ENCODE measurements at regions of chr5 and their contacts with region 1.

Region 1: DNA sequence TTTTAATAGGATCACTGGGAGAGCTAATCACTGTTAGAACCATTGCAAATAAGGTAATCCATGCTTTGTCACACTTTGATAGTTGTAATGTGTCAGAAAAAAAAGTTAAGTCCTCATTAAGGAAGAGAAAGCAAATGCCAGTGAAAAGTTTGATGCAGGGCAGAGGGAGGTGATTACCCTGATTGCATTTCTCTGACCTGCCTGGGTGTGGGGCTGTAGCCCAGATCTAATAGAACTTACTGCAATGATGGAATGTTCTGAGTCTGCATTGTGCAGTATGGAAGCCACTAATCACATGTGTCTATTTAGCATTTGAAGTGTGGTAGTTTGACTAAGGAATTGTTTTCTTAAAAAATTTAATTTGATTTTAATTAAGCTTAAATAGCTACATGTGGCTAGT is 202.7 kb downstream of the ATP10B start:
- DNase-seq: peak; percentile 56
- H3K4me3 Mint-ChIP-seq: no peak overlapping the region
- H3K27ac Mint-ChIP-seq: no peak overlapping the region
- H3K4me1 Mint-ChIP-seq: no peaks in the 10 kb centered on the region
- H3K27me3 Mint-ChIP-seq: no peaks in the 10 kb centered on the region
- CTCF ChIP-seq: peak; percentile 56

Region 2: DNA sequence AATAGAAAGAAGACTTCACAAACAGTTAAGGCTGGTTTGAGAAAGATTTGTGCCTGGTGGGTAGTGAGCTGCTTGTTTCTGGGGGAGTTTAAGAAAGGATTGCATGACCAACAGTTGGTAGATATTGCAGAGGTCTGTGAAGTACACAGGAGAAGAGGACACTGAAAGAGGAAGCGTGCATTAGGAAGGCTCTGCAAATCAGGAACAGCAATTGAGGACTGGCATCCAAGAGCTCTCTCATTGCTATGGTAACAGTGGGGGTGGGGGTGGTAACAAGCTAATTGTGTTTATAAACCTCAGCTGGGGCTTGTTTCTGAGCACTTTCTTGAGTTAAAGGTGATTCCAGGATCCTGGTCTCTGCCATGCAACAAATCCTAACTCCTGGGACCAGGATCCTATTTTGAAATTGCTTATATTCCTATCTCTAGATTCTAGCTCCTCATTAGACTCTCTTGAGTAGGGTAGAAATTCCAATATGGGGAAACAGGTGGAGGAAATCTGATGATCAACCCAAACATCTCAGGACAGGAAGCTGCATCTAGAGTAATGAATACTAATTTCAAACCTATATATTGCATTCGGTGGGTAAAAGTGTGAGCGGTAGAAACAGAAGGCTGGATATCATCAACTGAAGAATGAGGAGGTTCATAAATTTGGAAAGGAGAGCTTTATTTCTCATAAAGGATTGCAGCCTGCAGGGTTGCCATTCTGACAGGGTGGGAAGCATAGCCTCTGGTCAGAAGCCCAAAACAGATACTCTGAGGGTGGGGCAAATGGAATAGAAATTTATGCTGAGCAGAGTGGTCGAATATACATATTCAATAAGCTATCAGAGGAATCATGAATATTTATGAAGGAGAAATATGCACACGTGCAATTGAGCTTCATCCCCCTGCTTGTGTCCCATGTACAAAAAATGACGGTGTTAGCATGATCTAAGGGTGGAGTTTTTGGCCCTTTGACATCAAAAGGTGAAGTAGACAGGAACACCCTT is 148.2 kb before region 1 on chr5:
- CTCF ChIA-PET with region 1: no interaction called
- POLR2A ChIA-PET with region 1: no interaction called
- intact Hi-C with region 1: no loop called
- DNase-seq: no peak
- H3K4me3 Mint-ChIP-seq: no peak overlapping the region
- H3K27ac Mint-ChIP-seq: no peak overlapping the region
- H3K4me1 Mint-ChIP-seq: no peaks in the 10 kb centered on the region
- H3K27me3 Mint-ChIP-seq: peaks cover 11% of the 10 kb centered on the region
- CTCF ChIP-seq: no peak

Region 3: DNA sequence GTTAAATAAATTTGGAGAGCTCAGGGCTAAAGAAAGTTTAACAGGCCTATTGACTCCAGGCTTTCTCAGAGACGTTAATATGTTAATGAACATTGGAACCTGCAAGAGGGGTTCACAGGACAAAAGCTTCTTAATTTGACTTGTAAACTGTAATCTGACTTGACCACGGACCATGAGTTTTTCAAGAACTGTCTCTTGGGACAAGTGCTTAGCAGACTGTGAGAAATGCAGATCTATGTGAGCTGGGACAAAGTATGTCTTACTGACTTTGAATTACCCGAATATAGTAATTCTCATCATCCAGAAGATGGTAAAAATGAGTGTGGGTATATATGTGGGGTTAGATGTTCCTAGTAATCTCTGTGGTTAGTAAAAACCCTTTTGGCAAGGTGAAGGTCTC is 16.2 kb after region 1 on chr5:
- CTCF ChIA-PET with region 1: no interaction called
- POLR2A ChIA-PET with region 1: no interaction called
- intact Hi-C with region 1: no loop called
- DNase-seq: no peak
- H3K4me3 Mint-ChIP-seq: no peak overlapping the region
- H3K27ac Mint-ChIP-seq: no peak overlapping the region
- H3K4me1 Mint-ChIP-seq: no peaks in the 10 kb centered on the region
- H3K27me3 Mint-ChIP-seq: no peaks in the 10 kb centered on the region
- CTCF ChIP-seq: no peak

Region 4: GRCh38 chr5:161676103-161676502 is 1026.8 kb after region 1 on chr5:
- CTCF ChIA-PET with region 1: no interaction called
- POLR2A ChIA-PET with region 1: no interaction called
- intact Hi-C with region 1: loop called (anchors 10 kb)
- DNase-seq: peak; percentile 54
- H3K4me3 Mint-ChIP-seq: no peak overlapping the region
- H3K27ac Mint-ChIP-seq: no peak overlapping the region
- H3K4me1 Mint-ChIP-seq: no peaks in the 10 kb centered on the region
- H3K27me3 Mint-ChIP-seq: peaks cover 29% of the 10 kb centered on the region
- CTCF ChIP-seq: peak; percentile 73